ENCODE measurements at regions of chr11 and their contacts with region 1.

Region 1: DNA sequence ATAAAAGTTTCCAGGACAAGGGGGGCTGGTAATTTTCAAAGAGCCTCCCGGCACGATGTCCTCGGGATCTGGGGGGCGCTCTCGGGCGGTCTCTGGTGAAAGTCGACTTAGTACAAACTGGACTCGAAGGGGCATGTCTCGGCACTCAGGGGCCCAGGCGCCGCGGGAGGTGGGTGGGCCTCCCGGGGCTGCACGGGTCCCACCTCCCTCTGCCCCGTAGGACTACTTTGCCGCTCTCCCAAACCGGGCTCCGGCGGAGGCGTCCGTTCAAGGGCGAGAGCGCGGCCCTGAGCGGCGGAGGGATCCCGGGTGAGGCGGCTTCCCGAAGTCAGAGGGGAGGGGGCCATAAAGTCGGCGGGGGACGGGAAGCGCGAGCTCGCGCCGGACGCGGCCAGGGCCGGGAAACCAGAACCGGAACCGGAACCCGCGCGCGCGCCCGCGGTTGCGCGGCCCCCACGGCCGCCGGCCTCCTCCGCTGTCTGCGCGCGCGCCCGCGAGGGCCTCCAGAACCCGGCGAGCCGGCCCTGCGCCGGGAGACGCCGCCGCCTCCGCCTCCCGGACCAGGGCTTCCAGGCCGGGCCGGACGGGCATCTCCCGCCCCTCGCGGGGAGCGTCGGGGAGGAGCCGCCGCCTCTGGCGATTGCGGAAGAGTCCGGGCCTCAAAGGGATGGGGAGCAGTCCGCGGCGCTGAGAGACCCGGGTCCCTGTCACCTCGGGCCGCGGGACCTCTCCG is at the start of gene ARHGEF12:
- DNase-seq: peak; percentile 94
- H3K4me3 ChIP-seq: peak within 1 kb of the TSS; percentile 79
- H3K27ac ChIP-seq: no peak within 1 kb of the TSS
- H3K4me1 ChIP-seq: peaks cover 31% of the 10 kb centered on the region
- CTCF ChIP-seq: peak; percentile 83
- total RNA-seq, gene ARHGEF12: 16.1 and 22.4 TPM in 2 replicates

Region 2: DNA sequence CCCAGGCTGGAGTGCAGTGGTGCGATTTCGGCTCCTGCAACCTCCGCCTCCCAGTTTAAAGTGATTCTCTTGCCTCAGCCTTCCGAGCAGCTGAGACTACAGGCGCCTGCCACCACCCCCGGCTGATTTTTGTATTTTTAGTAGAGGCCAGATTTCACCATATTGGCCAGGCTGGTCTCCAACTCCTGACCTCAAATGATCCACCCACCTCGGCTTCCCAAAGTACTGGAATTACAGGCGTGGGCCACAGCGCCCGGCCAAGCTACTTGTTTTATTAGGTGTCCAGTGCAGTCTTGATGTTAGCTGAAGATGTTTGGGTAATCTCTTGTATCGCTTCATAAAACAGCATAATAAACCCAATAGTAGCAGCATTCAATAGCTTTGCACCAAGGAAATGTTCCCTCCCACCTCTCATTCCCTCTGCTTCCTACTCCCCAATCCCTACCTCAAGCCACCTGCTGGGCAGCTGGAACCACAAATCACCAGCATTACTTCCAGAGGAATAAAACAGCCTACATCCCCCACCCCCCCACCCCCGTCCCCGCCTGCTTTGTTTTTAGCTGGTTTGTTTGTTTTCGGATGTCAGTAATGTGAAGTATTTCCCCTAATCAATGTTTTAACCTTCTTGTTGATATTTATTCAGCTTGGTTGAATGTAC is 164.5 kb after region 1 on chr11:
- CTCF ChIA-PET with region 1: interaction called, 3 read pairs
- POLR2A ChIA-PET with region 1: no interaction called
- intact Hi-C with region 1: loop called (anchors 5 kb)
- DNase-seq: no peak
- H3K4me3 ChIP-seq: no peak overlapping the region
- H3K27ac ChIP-seq: no peak overlapping the region
- H3K4me1 ChIP-seq: no peaks in the 10 kb centered on the region
- CTCF ChIP-seq: no peak

Region 3: DNA sequence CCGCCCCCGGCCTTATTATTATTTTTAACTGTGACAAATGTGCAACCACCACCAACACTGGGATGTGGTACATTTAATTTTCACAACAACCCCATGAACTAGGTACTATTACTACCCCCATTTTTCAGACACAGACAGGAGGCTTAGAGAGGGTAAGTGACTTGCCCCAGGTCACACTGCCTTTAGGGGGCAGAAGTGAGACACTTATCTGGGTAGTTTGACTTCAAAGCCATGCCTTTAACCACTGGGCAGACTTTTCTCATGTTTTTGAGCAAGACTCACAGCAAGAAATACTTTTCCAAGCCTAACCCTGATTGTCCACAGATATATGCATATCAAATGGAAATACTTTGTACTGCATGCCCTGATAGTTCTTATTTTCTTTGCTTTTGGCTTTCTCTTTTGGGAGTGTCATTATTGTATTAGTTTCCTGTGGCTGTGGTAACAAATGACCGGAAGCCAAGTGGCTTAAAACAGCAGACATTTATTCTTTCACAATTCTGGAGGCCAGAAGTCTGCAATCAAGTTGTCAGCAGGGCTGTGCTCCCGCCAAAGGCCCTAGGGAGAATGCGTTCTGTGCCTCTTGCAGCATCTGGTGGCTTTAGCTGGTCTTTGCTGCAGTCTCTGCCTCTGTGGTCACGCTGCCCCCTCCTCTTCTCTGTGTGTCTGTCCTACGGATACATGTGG is 286.3 kb after region 1 on chr11:
- CTCF ChIA-PET with region 1: no interaction called
- POLR2A ChIA-PET with region 1: no interaction called
- intact Hi-C with region 1: loop called (anchors 10 kb)
- DNase-seq: peak; percentile 43
- H3K4me3 ChIP-seq: no peak overlapping the region
- H3K27ac ChIP-seq: no peak overlapping the region
- H3K4me1 ChIP-seq: peaks cover 6% of the 10 kb centered on the region
- CTCF ChIP-seq: peak; percentile 69

Region 4: GRCh38 chr11:120682866-120683265 is 346.8 kb after region 1 on chr11:
- CTCF ChIA-PET with region 1: no interaction called
- POLR2A ChIA-PET with region 1: no interaction called
- intact Hi-C with region 1: loop called (anchors 10 kb)
- DNase-seq: no peak
- H3K4me3 ChIP-seq: no peak overlapping the region
- H3K27ac ChIP-seq: no peak overlapping the region
- H3K4me1 ChIP-seq: peaks cover 3% of the 10 kb centered on the region
- CTCF ChIP-seq: no peak